Ascending aorta (tissue), 2 donors: ENCODE measurements at regions of chr10 and their contacts with region 1.

Region 1: DNA sequence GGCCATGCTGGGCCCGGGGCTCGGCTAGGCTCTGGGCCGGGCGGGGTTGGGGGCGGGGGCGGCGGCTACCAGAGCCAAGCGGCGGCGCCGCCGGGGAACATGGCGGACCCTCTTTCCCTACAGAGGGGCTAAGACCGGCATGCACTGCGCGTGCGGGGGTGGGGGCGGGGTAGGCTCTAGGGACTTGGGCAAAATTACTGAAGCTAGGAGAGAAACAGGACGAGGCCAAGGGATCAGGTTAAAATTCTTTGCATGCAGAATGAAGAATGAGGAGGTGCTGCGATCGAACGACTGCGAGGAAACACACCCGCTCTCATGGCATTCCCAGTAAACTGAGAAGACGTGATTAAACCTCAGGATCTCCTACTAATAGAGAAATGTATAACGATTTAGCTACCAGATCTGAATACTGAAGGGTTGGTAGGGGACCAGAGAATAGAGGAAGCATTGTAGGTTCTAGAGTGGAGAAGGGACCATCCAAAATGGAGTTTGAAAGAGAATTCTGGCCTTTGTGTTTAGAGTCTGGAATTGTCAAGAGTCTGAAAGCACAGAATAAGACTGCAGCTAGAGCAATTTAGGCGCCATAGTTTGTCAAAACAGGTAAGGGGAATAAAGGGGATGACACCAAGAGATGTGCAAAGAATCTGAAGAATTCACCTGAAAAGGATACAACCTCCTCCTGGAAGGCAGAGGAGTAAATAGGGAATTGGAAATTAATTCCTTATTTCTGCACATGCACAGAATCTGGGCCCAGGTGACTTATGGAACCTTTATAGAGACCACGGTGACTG is at the start of gene PPP3CB:
- DNase-seq: peak; percentile 75 to 95
- H3K4me3 ChIP-seq: peak within 1 kb of the TSS; percentile 63 to 88
- H3K27ac ChIP-seq: peak within 1 kb of the TSS; percentile 95 to 97
- H3K4me1 ChIP-seq: peaks cover 6 to 19% of the 10 kb centered on the region in 2 donors
- H3K27me3 ChIP-seq: no peaks in the 10 kb centered on the region
- CTCF ChIP-seq: no peak
- total RNA-seq, gene PPP3CB: 23.0 TPM

Region 2: GRCh38 chr10:73252445-73253224 is 243.4 kb before region 1 on chr10 and contains the start of gene MRPS16:
- intact Hi-C with region 1: loop called (anchors 5 kb)
- DNase-seq: peak; percentile 88 to 98
- H3K4me3 ChIP-seq: peak within 1 kb of the TSS; percentile 74 to 89
- H3K27ac ChIP-seq: peak within 1 kb of the TSS; percentile 91 to 92
- H3K4me1 ChIP-seq: peaks cover 7 to 17% of the 10 kb centered on the region in 2 donors
- H3K27me3 ChIP-seq: no peaks in the 10 kb centered on the region
- CTCF ChIP-seq: no peak
- total RNA-seq, gene MRPS16: 44.5 TPM

Region 3: DNA sequence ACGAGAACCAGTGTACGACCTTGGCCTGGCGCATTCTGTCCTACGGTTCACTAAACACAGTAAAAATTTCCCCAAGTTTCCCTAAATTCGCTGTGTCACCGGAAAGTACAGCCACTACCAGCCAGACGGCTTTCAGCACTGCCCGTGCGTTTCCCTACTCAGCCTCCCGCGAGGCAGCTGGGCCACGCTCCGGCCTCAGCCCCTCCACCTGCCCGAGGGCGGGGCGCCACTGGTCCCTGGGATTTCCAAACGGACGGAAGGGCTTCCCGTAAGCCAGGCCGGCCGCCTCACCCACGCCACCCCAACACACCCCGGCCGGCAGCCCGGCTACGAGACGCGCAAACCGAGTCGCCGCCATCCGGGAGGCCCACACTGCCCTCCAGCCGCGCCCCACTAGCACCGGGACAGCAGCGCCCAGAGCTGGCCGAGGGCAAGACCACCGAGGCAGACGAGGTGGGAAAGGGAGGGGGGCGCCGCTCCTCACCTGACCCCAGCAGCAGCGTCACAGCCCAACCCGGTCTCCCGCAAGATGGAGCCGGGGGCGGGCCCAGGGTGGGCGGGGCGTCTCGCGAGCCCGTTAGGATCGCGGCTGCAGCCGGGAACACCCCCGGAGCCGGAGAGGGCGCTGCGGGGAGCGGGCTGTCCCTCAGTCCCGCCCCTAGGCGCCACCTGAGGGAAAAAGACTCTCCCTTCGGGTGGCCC is 82.4 kb before region 1 on chr10 and contains the start of gene ANXA7:
- intact Hi-C with region 1: loop called (anchors 1 kb)
- DNase-seq: peak; percentile 63 to 96
- H3K4me3 ChIP-seq: peak within 1 kb of the TSS; percentile 87 to 93
- H3K27ac ChIP-seq: peak within 1 kb of the TSS; percentile 96 to 98
- H3K4me1 ChIP-seq: peaks cover 3 to 10% of the 10 kb centered on the region in 2 donors
- H3K27me3 ChIP-seq: no peaks in the 10 kb centered on the region
- CTCF ChIP-seq: peak in 1 of 3 experiments; percentile 45
- total RNA-seq, gene ANXA7: 63.2 TPM

Region 4: DNA sequence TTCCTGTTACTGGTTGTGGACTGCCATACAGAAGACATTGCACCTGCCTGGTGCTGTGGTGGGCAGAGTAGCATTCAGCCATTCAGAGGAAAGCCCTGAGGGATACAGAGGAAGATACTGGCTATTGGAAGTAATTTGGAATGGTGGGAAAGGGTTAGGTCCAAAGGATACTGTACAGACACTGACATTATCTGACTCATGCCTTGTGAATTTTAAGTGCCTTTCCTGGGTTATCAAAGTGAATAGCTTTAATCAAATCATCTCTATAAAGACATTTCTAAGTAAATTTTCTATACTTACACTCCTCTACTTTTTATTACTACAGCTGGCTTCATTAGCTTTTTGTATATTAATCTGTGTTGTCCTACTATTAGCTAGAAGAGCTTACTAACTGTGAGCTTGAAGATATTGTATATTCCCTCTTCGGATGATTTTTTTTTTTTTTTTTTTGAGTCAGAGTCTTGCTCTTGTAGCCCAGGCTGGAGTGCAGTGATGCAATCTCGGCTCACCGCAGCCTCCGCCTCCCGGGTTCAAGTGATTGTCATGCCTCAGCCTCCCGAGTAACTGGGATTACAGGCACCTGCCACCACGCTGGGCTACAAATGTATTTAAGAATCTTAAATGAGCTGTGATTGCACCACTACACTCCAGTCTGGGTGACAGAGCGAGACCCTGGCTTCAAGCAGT is 841.4 kb after region 1 on chr10:
- intact Hi-C with region 1: no loop called
- DNase-seq: no peak
- H3K4me3 ChIP-seq: no peak overlapping the region
- H3K27ac ChIP-seq: no peak overlapping the region
- H3K4me1 ChIP-seq: no peaks in the 10 kb centered on the region
- H3K27me3 ChIP-seq: no peaks in the 10 kb centered on the region
- CTCF ChIP-seq: no peak